IMR-90 (cell line): ENCODE measurements at regions of chr5 and their contacts with region 1.

Region 1: GRCh38 chr5:91383027-91383955 is at the start of gene ARRDC3:
- DNase-seq: peak; percentile 94
- ATAC-seq: peak; percentile 63
- H3K4me3 ChIP-seq: peak within 1 kb of the TSS; percentile 71
- H3K27ac ChIP-seq: peak within 1 kb of the TSS; percentile 84
- H3K4me1 ChIP-seq: no peaks in the 10 kb centered on the region
- H3K27me3 ChIP-seq: no peaks in the 10 kb centered on the region
- CTCF ChIP-seq: no peak
- POLR2A ChIP-seq: peak; percentile 100
- RAD21 ChIP-seq: no peak
- total RNA-seq, gene ARRDC3: 82.2 and 86.7 TPM in 2 replicates

Region 2: GRCh38 chr5:91090995-91091394 is 292.3 kb before region 1 on chr5:
- CTCF ChIA-PET with region 1: interaction called, 10 read pairs
- POLR2A ChIA-PET with region 1: no interaction called
- dilution Hi-C with region 1: no loop called
- in situ Hi-C with region 1: loop called (anchors 5 kb)
- intact Hi-C with region 1: no loop called
- DNase-seq: no peak
- ATAC-seq: no peak
- H3K4me3 ChIP-seq: no peak overlapping the region
- H3K27ac ChIP-seq: no peak overlapping the region
- H3K4me1 ChIP-seq: no peaks in the 10 kb centered on the region; the same call in 1 of the 2 replicates
- H3K27me3 ChIP-seq: no peaks in the 10 kb centered on the region
- CTCF ChIP-seq: no peak
- POLR2A ChIP-seq: no peak
- RAD21 ChIP-seq: no peak

Region 3: GRCh38 chr5:91176288-91177016 is 206.8 kb before region 1 on chr5:
- CTCF ChIA-PET with region 1: no interaction called
- POLR2A ChIA-PET with region 1: interaction called, 14 read pairs
- dilution Hi-C with region 1: no loop called
- in situ Hi-C with region 1: no loop called
- intact Hi-C with region 1: loop called (anchors 5 kb)
- DNase-seq: peak; percentile 60
- ATAC-seq: peak; percentile 94
- H3K4me3 ChIP-seq: no peak overlapping the region
- H3K27ac ChIP-seq: no peak overlapping the region
- H3K4me1 ChIP-seq: peaks cover 12% of the 10 kb centered on the region
- H3K27me3 ChIP-seq: no peaks in the 10 kb centered on the region
- CTCF ChIP-seq: no peak
- POLR2A ChIP-seq: no peak
- RAD21 ChIP-seq: no peak

Region 4: GRCh38 chr5:91280362-91281269 is 102.7 kb before region 1 on chr5:
- CTCF ChIA-PET with region 1: interaction called, 4 read pairs
- POLR2A ChIA-PET with region 1: interaction called, 23 read pairs
- dilution Hi-C with region 1: no loop called
- in situ Hi-C with region 1: no loop called
- intact Hi-C with region 1: loop called (anchors 1 kb)
- DNase-seq: peak; percentile 99
- ATAC-seq: peak; percentile 88
- H3K4me3 ChIP-seq: peak overlapping the region; percentile 48
- H3K27ac ChIP-seq: peak overlapping the region; percentile 98
- H3K4me1 ChIP-seq: peaks cover 16% of the 10 kb centered on the region
- H3K27me3 ChIP-seq: no peaks in the 10 kb centered on the region
- CTCF ChIP-seq: no peak; the same call in 1 of the 2 replicates
- POLR2A ChIP-seq: peak; percentile 94
- RAD21 ChIP-seq: peak; percentile 37; the same call in 1 of the 2 replicates

Region 5: GRCh38 chr5:91403438-91403837 is 20.1 kb after region 1 on chr5:
- CTCF ChIA-PET with region 1: interaction called, 6 read pairs
- POLR2A ChIA-PET with region 1: interaction called, 11 read pairs
- dilution Hi-C with region 1: no loop called
- in situ Hi-C with region 1: no loop called
- intact Hi-C with region 1: no loop called
- DNase-seq: peak; percentile 53
- ATAC-seq: peak; percentile 85
- H3K4me3 ChIP-seq: no peak overlapping the region
- H3K27ac ChIP-seq: peak overlapping the region; percentile 95; the same call in 1 of the 2 replicates
- H3K4me1 ChIP-seq: peaks cover 4% of the 10 kb centered on the region
- H3K27me3 ChIP-seq: no peaks in the 10 kb centered on the region
- CTCF ChIP-seq: no peak
- POLR2A ChIP-seq: no peak
- RAD21 ChIP-seq: no peak

Region 6: DNA sequence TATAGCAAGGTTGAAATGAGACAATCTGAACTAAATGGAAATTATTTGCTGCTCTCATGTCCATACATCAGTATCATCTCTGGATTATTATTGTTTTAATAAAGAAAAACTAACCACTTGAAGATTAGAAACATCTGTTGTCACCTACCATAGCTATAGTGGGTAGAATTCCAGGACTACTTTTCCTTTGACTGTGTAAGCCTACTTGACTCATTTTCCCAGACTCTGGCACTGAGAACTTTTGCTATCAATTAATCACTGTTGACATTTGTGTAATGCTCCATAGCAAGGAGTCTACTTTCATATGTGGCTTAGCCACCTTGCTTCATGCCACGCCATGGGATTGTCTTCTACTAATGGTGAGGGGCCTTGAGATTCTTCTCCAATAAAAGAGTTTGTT is 59.7 kb after region 1 on chr5:
- CTCF ChIA-PET with region 1: no interaction called
- POLR2A ChIA-PET with region 1: no interaction called
- dilution Hi-C with region 1: no loop called
- in situ Hi-C with region 1: no loop called
- intact Hi-C with region 1: no loop called
- DNase-seq: peak; percentile 69
- ATAC-seq: peak; percentile 44
- H3K4me3 ChIP-seq: no peak overlapping the region
- H3K27ac ChIP-seq: no peak overlapping the region
- H3K4me1 ChIP-seq: no peaks in the 10 kb centered on the region
- H3K27me3 ChIP-seq: no peaks in the 10 kb centered on the region
- CTCF ChIP-seq: no peak
- POLR2A ChIP-seq: no peak
- RAD21 ChIP-seq: no peak

Region 7: DNA sequence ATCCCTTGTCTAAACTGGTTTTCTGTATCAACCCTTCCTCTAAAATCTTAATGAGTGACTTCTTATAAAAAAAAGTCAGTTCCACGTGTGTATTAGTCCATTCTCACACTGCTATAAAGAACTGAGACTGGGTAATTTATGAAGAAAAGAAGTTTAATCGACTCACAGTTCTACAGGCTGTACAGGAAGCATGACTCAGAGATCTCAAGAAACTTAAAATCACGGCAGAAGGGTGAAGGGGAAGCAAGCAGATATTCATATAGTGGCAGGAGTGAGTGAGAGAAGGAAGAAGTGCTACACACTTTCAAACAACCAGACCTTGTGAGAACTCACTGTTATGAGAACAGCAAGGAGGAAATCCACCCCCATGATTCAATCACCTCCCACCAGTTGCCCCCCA is 307.6 kb after region 1 on chr5:
- CTCF ChIA-PET with region 1: no interaction called
- POLR2A ChIA-PET with region 1: no interaction called
- dilution Hi-C with region 1: no loop called
- in situ Hi-C with region 1: no loop called
- intact Hi-C with region 1: no loop called
- DNase-seq: no peak
- ATAC-seq: no peak
- H3K4me3 ChIP-seq: no peak overlapping the region
- H3K27ac ChIP-seq: no peak overlapping the region
- H3K4me1 ChIP-seq: no peaks in the 10 kb centered on the region
- H3K27me3 ChIP-seq: no peaks in the 10 kb centered on the region
- CTCF ChIP-seq: no peak
- POLR2A ChIP-seq: no peak
- RAD21 ChIP-seq: no peak